Heart left ventricle (tissue), 16 donors: ENCODE measurements at regions of chr7 and their contacts with region 1.

Region 1: DNA sequence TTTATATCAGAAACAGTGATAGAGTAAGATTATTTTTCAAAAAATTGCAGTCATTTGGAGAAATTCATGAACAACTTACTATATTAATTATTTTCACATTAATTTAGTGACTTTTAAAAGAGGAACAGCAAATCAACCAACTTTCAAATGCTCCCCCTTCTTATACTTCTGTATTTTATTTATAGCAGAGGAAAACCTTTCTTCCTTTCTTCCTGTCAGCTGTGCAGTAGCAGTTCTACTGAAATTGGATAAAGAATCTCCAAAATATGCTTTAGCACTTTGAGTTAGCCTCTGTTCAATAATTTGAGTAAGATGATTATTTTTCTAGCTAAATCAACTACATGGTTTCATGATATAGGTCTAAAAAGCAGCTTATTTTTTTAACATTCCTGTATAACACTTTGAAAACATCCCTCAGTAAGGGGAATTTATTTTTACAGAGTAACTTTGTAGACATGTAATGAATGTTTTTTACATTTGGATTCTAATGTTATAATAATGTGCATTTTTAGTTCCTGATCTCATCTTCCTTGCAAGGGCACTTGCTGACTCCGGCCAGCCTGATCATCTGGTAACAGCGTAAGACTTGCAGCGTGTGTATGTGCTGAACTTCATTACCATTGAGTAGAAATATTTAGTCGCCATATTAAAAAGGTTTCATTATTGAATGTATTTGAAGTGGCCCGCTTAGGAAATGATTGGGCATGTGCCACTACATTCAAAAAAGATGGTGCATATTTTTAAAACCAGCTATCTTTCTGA is 158.3 kb upstream of the HDAC9 start:
- DNase-seq: peak in 2 of 5 donors; percentile 29 to 40
- ATAC-seq: peak in 3 of 4 donors; percentile 52 to 73 (median 59)
- H3K4me3 ChIP-seq: peak overlapping the region in 2 of 12 donors; percentile 4 to 6
- H3K27ac ChIP-seq: peak overlapping the region in 3 of 12 donors; percentile 2 to 59 (median 19)
- H3K4me1 ChIP-seq: peaks cover 0 to 30% (median 0%) of the 10 kb centered on the region in 12 donors
- H3K27me3 ChIP-seq: no peaks in the 10 kb centered on the region
- CTCF ChIP-seq: no peak
- POLR2A ChIP-seq: no peak

Region 2: GRCh38 chr7:17986851-17987250 is 350.4 kb before region 1 on chr7:
- intact Hi-C with region 1: loop called in 2 of 10 experiments (anchors 5 to 10 kb)
- DNase-seq: no peak
- ATAC-seq: peak in 3 of 4 donors; percentile 42 to 63 (median 54)
- H3K4me3 ChIP-seq: no peak overlapping the region
- H3K27ac ChIP-seq: peak overlapping the region in 7 of 12 donors; percentile 9 to 75 (median 51)
- H3K4me1 ChIP-seq: peaks cover 0 to 12% (median 0%) of the 10 kb centered on the region in 12 donors
- H3K27me3 ChIP-seq: no peaks in the 10 kb centered on the region
- CTCF ChIP-seq: no peak
- POLR2A ChIP-seq: no peak

Region 3: DNA sequence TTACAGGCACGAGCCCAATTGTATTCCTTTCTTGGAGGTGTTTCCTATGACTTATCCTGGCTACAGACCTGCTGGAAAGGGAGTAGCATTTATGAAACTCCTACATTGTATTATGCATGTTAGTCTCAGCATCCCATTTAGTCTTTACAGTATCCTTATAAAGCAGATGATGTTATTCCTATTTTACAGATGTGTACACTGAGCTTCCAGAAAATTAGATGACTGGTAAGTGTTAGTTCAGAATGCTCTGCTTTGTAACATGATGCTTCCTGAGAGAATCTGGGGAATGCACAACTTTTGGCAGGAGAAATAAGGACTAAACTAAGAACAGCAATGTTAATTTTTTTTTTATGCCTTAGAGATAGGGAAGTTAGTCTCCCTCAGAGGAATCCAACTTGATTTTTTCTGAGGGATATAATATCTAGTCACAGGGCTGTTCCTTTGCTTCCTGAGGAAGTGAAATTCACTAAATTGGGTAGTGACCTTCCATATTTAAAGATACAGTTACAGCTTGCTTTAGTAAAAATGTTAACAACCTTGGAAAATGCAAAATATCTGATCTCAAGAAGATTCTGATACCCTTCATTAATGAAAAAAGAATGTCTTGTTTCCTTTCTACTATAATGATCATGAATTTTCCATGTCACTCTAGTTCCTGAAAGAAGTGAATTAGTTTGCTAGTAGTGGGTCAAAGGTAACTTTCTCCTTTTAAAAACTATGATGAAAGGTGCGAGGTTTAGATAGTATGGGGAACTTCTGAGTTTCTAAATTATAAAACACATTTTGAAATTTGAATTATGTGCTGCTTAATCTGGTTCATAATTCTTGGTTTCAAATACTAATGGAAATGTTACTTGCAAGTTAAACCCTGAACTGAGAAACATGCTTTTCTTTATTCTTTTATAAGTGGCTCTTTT is 115.6 kb before region 1 on chr7:
- intact Hi-C with region 1: loop called in 1 of 10 experiments (anchors 10 kb)
- DNase-seq: no peak
- ATAC-seq: peak in 3 of 4 donors; percentile 27 to 50 (median 43)
- H3K4me3 ChIP-seq: no peak overlapping the region
- H3K27ac ChIP-seq: peak overlapping the region in 4 of 12 donors; percentile 2 to 57 (median 11)
- H3K4me1 ChIP-seq: peaks cover 0 to 60% (median 7%) of the 10 kb centered on the region in 12 donors
- H3K27me3 ChIP-seq: no peaks in the 10 kb centered on the region
- CTCF ChIP-seq: no peak
- POLR2A ChIP-seq: no peak